Activated naive CD4-positive, alpha-beta T cell treated with anti-CD3 and anti-CD28 coated beads for 36 hours (primary cell): ENCODE measurements at regions of chr9 and their contacts with region 1.

Region 1: DNA sequence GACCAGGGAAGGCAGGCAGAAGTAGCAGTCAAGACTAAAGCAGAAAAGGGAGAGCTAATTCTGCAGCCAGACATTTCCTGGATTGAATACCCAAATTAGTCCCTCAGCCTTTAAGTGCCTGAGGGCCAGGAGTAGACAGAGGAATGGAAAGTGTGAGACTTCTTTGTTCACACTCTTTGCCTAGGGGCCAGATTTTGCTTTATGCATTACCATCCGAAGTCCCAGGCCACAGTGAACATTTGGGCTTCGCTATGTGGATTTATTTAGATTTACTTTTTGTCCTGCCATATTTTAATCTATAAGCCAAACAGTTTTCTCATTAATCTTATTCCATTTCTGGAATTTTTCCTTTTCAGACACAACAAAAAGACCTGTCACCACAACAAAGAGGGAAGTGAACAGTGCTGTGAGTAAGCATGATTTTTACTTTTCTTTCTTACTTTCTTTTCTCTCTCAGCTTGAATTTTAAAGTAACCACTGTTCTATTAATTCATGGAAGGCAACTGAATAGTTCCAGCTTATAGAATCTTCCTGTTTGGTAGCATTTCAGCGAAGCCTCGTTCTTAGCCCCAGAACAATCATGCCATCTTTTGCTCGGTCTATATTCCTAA is 52.6 kb downstream of the PDCD1LG2 start:
- DNase-seq: no peak
- H3K4me3 Mint-ChIP-seq: no peak overlapping the region
- H3K27ac Mint-ChIP-seq: no peak overlapping the region
- H3K4me1 Mint-ChIP-seq: peaks cover 43% of the 10 kb centered on the region
- H3K27me3 Mint-ChIP-seq: no peaks in the 10 kb centered on the region

Region 2: DNA sequence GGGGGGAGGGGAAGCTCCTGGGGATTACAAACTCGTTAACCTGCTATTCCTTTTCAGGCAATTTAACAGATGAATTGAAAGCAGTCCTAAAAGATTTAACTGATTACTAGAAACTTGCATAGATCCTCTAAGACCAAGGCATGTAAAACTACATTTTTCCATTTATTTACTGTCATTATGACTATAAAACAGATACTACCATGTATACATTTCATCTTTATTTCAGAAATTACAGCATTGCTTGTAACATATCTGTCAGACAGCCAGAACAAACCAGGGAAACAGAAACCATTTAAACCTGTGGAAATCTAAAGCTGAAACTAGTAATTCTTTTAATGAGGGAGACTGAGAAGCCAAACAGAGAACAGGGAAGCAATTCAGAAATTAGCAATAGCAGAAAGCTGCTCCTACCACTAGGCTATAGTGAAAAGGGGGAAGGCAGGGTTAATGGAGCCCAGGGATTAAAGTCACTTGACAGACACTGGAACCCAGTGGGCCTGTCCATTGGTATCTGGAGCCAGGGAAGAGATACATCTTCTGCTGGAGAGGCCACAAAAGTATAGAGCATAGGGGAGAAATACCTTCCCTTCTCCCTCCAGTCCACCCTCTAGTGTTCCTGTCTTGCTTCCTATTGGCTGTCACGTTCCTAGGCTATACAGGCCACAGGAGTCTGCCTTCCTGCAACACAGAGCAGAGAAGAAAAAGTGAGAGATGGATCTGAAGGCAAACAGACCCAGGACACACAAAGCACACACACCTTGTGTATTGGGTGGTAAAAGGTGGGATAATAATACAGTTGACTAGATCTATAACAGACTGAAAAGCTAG is 18.8 kb before region 1 on chr9:
- CTCF ChIA-PET with region 1: interaction called, 4 read pairs
- intact Hi-C with region 1: loop called (anchors 1 kb)
- DNase-seq: no peak
- H3K4me3 Mint-ChIP-seq: no peak overlapping the region
- H3K27ac Mint-ChIP-seq: no peak overlapping the region
- H3K4me1 Mint-ChIP-seq: peaks cover 12% of the 10 kb centered on the region
- H3K27me3 Mint-ChIP-seq: no peaks in the 10 kb centered on the region